HepG2 (cell line): ENCODE measurements at regions of chr13 and their contacts with region 1.

Region 1: GRCh38 chr13:102596147-102597028 is at the start of gene TPP2:
- DNase-seq: peak; percentile 94
- ATAC-seq: peak; percentile 93
- H3K4me3 ChIP-seq: peak within 1 kb of the TSS; percentile 85 to 92 (median 88)
- H3K27ac ChIP-seq: peak within 1 kb of the TSS; percentile 94
- H3K4me1 ChIP-seq: peaks cover 49% of the 10 kb centered on the region
- H3K27me3 ChIP-seq: no peaks in the 10 kb centered on the region; a peak in 2 of 5 replicates
- CTCF ChIP-seq: no peak
- EP300 ChIP-seq: no peak
- POLR2A ChIP-seq: peak; percentile 83 to 94
- RAD21 ChIP-seq: no peak
- total RNA-seq, gene TPP2: 52.1 and 71.7 TPM in 2 replicates

Region 2: GRCh38 chr13:101092985-101093384 is 1503.4 kb before region 1 on chr13:
- CTCF ChIA-PET with region 1: no interaction called
- POLR2A ChIA-PET with region 1: no interaction called
- in situ Hi-C with region 1: no loop called
- intact Hi-C with region 1: no loop called
- DNase-seq: no peak
- ATAC-seq: no peak
- H3K4me3 ChIP-seq: no peak overlapping the region
- H3K27ac ChIP-seq: no peak overlapping the region
- H3K4me1 ChIP-seq: no peaks in the 10 kb centered on the region
- H3K27me3 ChIP-seq: peaks cover 3 to 20% of the 10 kb centered on the region in 2 experiments; a peak in 2 of 5 replicates
- CTCF ChIP-seq: no peak
- EP300 ChIP-seq: no peak
- POLR2A ChIP-seq: no peak
- RAD21 ChIP-seq: no peak

Region 3: DNA sequence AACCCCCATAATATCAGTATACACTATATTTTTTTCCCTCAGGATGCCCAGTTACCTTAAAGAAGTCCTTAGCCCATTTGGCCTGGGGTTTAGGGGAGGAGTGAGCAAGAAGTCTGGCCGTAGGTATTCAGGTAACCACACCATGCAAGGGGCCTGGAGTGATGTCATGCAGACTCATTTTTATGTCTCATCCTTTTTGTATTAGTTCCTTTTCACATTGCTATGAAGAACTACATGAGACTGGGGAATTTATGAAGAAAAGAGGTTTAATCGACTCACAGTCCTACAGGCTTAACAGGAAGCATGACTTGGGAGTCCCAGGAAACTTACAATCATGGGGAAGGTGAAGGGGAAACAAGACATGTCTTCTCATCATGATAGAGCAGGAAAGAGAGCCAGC is 12.6 kb after region 1 on chr13:
- CTCF ChIA-PET with region 1: no interaction called
- POLR2A ChIA-PET with region 1: interaction called, 17 read pairs
- in situ Hi-C with region 1: no loop called
- intact Hi-C with region 1: no loop called
- DNase-seq: no peak
- ATAC-seq: no peak
- H3K4me3 ChIP-seq: no peak overlapping the region
- H3K27ac ChIP-seq: no peak overlapping the region
- H3K4me1 ChIP-seq: no peaks in the 10 kb centered on the region
- H3K27me3 ChIP-seq: no peaks in the 10 kb centered on the region
- CTCF ChIP-seq: no peak
- EP300 ChIP-seq: no peak
- POLR2A ChIP-seq: no peak
- RAD21 ChIP-seq: no peak

Region 4: GRCh38 chr13:102657630-102658029 is 61.2 kb after region 1 on chr13:
- CTCF ChIA-PET with region 1: no interaction called
- POLR2A ChIA-PET with region 1: no interaction called
- in situ Hi-C with region 1: no loop called
- intact Hi-C with region 1: loop called (anchors 5 kb)
- DNase-seq: no peak
- ATAC-seq: no peak
- H3K4me3 ChIP-seq: no peak overlapping the region
- H3K27ac ChIP-seq: no peak overlapping the region
- H3K4me1 ChIP-seq: no peaks in the 10 kb centered on the region
- H3K27me3 ChIP-seq: no peaks in the 10 kb centered on the region
- CTCF ChIP-seq: no peak
- EP300 ChIP-seq: no peak
- POLR2A ChIP-seq: no peak
- RAD21 ChIP-seq: no peak